Activated T-helper 2 cell treated with anti-CD3 and anti-CD28 coated beads, Interferon-gamma antibody, Interleukin-2, Interleukin-4, amounts not matched to agents 10 μg/mL and 5 μg/mL and 100 μg/mL, durations not matched to agents 14 hours and 24 hours and 36 hours (primary cell): ENCODE measurements at regions of chr9 and their contacts with region 1.

Region 1: GRCh38 chr9:5628530-5629311 is at the start of gene RIC1:
- DNase-seq: peak; percentile 89
- H3K4me3 Mint-ChIP-seq: peak within 1 kb of the TSS; percentile 100
- H3K27ac Mint-ChIP-seq: peak within 1 kb of the TSS; percentile 97
- H3K4me1 Mint-ChIP-seq: peaks cover 56% of the 10 kb centered on the region
- H3K27me3 Mint-ChIP-seq: no peaks in the 10 kb centered on the region
- total RNA-seq, gene RIC1: 21.5 and 22.1 TPM in 2 replicates

Region 2: GRCh38 chr9:4679268-4680172 is 949.2 kb before region 1 on chr9 and contains the start of gene CDC37L1:
- intact Hi-C with region 1: loop called (anchors 5 kb)
- DNase-seq: peak; percentile 99
- H3K4me3 Mint-ChIP-seq: no peak within 1 kb of the TSS
- H3K27ac Mint-ChIP-seq: no peak within 1 kb of the TSS
- H3K4me1 Mint-ChIP-seq: peaks cover 6% of the 10 kb centered on the region
- H3K27me3 Mint-ChIP-seq: peaks cover 2% of the 10 kb centered on the region
- total RNA-seq, gene CDC37L1: 10.0 and 10.2 TPM in 2 replicates

Region 3: DNA sequence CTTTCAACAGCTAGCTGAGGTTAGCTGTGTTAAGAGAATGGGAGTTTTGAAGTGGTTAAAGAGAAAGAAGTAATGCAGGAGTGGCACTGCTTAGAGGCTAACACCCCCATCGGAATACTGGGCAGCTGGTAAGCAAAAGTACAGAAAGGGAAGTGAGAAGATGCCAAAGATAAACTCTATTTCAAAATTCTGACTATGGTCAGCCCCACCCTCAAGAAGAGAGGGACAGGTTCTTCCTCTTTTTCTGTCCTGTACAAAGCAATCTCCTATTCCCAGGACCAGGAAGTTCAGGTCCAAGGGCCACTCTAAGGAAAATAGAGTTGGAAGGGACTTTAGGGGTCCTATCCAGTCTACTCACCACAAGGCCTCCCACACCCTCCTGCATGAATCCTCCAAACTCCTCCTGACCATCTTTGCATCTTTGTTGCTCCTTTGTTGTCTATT is 689.6 kb before region 1 on chr9:
- intact Hi-C with region 1: loop called (anchors 5 kb)
- DNase-seq: peak; percentile 39
- H3K4me3 Mint-ChIP-seq: peak overlapping the region; percentile 14
- H3K27ac Mint-ChIP-seq: peak overlapping the region; percentile 90
- H3K4me1 Mint-ChIP-seq: peaks cover 65% of the 10 kb centered on the region
- H3K27me3 Mint-ChIP-seq: no peaks in the 10 kb centered on the region

Region 4: DNA sequence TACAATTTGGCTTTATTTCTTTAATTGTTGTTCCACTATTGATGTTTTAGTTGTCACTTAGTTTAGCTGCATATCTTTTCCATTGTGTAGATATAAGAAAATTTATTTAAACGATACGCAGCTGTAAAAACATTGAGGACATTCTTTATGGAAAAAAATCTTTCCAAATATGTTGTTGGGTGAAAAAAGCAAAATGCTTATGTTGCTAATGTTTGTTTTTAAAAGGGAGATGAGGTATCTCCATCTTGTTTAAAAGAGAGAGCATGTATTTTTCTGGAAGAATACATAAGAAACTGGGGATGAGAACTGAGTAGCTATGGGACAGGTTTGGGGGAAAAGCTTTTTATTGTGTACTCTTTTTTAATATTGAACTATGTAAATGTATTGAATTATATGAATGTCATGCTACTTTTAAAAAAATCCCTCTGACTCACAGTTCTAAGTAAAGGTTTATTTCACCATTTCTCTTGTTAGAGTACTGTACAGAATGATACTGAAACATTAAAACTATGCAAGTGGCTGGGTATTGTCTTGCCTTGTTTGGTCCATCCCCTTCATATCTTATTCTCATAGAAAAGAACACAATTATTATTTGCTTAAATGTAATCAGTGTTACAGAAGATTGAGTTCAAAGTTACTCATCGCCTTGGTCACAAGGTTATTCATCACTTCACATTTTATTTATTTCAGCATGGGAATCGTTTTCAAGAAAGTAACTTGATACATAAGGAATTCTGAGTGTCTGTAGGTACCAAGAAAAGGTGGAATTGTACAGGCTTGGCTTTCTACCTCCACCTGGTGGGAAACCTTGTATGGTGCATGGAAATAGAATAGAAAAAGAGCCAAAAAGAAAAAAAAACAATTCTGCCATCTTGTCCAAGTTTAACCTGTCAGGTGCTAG is 86.0 kb after region 1 on chr9:
- intact Hi-C with region 1: loop called (anchors 5 kb)
- DNase-seq: no peak
- H3K4me3 Mint-ChIP-seq: no peak overlapping the region
- H3K27ac Mint-ChIP-seq: no peak overlapping the region
- H3K4me1 Mint-ChIP-seq: peaks cover 10% of the 10 kb centered on the region
- H3K27me3 Mint-ChIP-seq: no peaks in the 10 kb centered on the region

Region 5: GRCh38 chr9:5799314-5799713 is 170.6 kb after region 1 on chr9:
- intact Hi-C with region 1: loop called (anchors 5 kb)
- DNase-seq: no peak
- H3K4me3 Mint-ChIP-seq: no peak overlapping the region
- H3K27ac Mint-ChIP-seq: peak overlapping the region; percentile 46
- H3K4me1 Mint-ChIP-seq: peaks cover 39% of the 10 kb centered on the region
- H3K27me3 Mint-ChIP-seq: no peaks in the 10 kb centered on the region

Region 6: DNA sequence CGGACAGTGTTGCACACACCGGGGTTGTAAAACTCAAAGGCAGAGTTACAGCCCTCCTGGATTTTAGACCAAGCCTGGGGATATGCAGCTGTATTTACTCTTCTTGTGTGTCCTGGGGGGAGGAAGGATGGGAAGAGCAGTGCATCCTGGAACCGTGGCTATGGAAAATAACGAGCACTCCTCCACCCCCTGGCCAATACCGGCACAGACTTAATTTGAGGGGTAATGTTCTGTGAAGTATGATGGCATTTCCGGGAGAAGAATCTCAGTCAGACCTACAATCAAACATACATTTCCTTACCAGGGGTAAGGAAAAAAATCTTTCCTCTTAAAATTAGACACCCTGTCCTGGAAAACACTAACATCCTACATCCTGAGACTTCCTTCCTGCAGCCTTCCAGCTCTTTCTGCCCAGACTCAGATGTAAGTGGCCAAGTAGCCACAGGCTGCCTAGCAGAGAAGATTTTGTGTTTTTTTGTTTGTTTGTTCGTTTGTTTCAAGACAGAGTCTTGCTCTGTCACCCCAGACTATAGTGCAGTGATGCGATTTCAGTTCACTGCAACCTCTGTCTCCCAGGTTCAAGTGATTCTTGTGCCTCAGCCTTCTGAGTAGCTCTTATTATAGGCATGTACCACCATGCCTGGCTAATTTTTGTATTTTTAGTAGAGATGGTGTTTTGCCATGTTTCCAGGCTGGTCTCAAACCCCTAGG is 215.2 kb after region 1 on chr9:
- intact Hi-C with region 1: loop called (anchors 2 kb)
- DNase-seq: no peak
- H3K4me3 Mint-ChIP-seq: peak overlapping the region; percentile 64
- H3K27ac Mint-ChIP-seq: peak overlapping the region; percentile 95
- H3K4me1 Mint-ChIP-seq: peaks cover 79% of the 10 kb centered on the region
- H3K27me3 Mint-ChIP-seq: no peaks in the 10 kb centered on the region

Region 7: DNA sequence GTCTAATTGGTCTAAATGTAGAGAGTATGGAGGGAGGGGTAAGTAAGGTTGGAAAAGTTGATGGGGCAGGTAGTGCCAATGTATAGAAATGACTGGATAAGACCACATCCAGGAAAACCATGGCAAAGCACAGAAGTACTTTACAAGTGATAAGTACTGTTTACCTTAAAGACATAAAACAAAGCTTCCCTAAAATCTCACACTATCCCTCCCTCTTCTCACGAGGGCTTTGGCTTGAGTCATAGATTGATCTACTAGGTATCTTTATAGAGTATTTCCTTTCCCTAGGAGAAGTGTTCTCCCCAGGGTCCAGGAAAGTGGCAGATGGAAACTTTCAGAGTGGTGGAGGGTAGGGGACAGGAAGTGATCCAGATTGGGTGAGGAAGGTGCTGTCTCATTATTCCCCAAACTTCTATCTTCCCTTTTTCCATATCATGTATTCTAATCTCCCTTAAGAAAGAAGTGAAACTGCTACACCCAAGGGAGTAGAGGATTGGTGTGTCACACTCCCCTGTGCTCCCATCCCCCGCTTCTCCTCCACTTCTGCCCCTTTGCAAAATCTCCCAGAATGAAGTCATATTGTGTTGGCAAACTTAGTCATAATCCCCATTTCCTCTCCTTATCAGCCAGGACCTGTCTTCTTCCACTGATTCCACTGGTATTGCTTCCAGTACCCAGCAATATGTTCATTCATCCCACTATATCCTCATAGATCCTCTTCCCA is 601.5 kb after region 1 on chr9:
- intact Hi-C with region 1: no loop called
- DNase-seq: no peak
- H3K4me3 Mint-ChIP-seq: no peak overlapping the region
- H3K27ac Mint-ChIP-seq: no peak overlapping the region
- H3K4me1 Mint-ChIP-seq: no peaks in the 10 kb centered on the region
- H3K27me3 Mint-ChIP-seq: peaks cover 10% of the 10 kb centered on the region